ENCODE measurements at regions of chr7 and their contacts with region 1.

Region 1: DNA sequence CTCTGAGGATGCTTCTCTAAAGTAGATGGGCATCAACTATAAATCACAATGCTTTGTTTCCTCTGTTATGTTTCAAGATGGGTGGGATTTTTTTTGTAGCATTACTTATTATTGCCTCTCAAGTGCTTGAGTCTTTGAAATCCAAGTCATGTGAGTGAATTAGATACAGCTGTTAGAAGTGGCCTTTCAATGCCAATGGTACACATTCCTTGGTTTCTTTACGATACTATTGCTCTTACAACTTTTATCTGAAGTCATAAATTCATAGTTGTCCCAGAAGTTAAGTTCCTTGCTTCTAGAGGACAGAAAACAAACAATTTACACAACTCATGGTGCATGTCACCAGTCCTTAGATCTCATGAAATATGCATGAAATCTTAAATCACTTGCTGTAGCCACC is 15.5 kb downstream of the CFTR start:
- DNase-seq: no peak
- ATAC-seq: no peak
- H3K4me3 ChIP-seq: no peak overlapping the region
- H3K27ac ChIP-seq: no peak overlapping the region
- H3K4me1 ChIP-seq: no peaks in the 10 kb centered on the region
- H3K27me3 ChIP-seq: no peaks in the 10 kb centered on the region
- CTCF ChIP-seq: no peak
- POLR2A ChIP-seq: no peak
- RAD21 ChIP-seq: no peak

Region 2: DNA sequence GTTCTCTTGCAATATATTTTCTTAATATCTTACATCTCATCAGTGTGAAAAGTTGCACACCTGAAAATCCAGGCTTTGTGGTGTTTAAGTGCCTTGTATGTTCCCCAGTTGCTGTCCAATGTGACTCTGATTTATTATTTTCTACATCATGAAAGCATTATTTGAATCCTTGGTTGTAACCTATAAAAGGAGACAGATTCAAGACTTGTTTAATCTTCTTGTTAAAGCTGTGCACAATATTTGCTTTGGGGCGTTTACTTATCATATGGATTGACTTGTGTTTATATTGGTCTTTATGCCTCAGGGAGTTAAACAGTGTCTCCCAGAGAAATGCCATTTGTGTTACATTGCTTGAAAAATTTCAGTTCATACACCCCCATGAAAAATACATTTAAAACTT is 14.3 kb after region 1 on chr7:
- CTCF ChIA-PET with region 1: no interaction called
- POLR2A ChIA-PET with region 1: no interaction called
- dilution Hi-C with region 1: no loop called
- in situ Hi-C with region 1: no loop called
- intact Hi-C with region 1: no loop called
- DNase-seq: no peak
- ATAC-seq: no peak
- H3K4me3 ChIP-seq: no peak overlapping the region
- H3K27ac ChIP-seq: no peak overlapping the region
- H3K4me1 ChIP-seq: no peaks in the 10 kb centered on the region
- H3K27me3 ChIP-seq: no peaks in the 10 kb centered on the region
- CTCF ChIP-seq: no peak
- POLR2A ChIP-seq: no peak
- RAD21 ChIP-seq: no peak

Region 3: DNA sequence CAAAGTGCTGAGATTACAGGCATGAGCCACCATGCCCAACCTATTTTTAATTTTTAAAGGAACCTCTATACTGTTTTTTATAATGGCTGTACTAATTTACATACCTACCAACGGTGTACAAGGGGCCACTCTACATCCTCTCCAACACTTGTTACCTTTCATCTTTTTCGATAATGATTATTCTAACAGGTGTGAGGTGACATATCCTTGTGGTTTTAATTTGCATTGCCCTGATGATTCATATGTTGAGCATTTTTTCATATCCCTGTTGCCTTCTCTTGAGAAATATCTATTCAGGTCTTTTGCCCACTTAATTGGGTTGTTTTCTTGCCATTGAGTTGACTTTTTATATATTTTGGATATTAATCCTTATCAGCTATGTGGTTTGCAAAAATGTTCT is 210.9 kb after region 1 on chr7:
- CTCF ChIA-PET with region 1: no interaction called
- POLR2A ChIA-PET with region 1: no interaction called
- dilution Hi-C with region 1: no loop called
- in situ Hi-C with region 1: no loop called
- intact Hi-C with region 1: no loop called
- DNase-seq: no peak
- ATAC-seq: no peak
- H3K4me3 ChIP-seq: no peak overlapping the region
- H3K27ac ChIP-seq: no peak overlapping the region
- H3K4me1 ChIP-seq: no peaks in the 10 kb centered on the region
- H3K27me3 ChIP-seq: no peaks in the 10 kb centered on the region
- CTCF ChIP-seq: no peak
- POLR2A ChIP-seq: no peak
- RAD21 ChIP-seq: no peak

Region 4: DNA sequence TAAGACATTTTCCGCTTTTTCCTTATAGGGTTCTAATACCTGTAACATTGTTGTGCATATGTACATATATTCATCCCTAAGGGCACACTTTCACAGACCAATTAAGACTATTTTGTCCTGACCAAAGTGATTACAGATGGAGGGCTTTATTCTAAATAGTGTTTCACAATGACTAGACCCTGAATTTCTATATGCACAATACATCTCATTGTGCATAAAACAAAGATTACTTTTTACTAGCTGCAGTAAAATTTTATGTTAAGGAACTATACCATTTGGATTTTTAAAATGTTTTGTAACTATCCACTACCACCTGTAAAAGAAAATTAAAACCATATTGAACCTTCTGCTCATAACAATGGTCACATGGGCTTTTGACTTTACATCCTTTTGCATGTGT is 290.1 kb after region 1 on chr7:
- CTCF ChIA-PET with region 1: no interaction called
- POLR2A ChIA-PET with region 1: no interaction called
- dilution Hi-C with region 1: no loop called
- in situ Hi-C with region 1: no loop called
- intact Hi-C with region 1: loop called (anchors 5 kb)
- DNase-seq: no peak
- ATAC-seq: no peak
- H3K4me3 ChIP-seq: no peak overlapping the region
- H3K27ac ChIP-seq: no peak overlapping the region
- H3K4me1 ChIP-seq: no peaks in the 10 kb centered on the region; the same call in 1 of the 2 replicates
- H3K27me3 ChIP-seq: no peaks in the 10 kb centered on the region
- CTCF ChIP-seq: no peak
- POLR2A ChIP-seq: no peak
- RAD21 ChIP-seq: no peak

Measured in IMR-90 (cell line).